Mammary epithelial cell (primary cell): ENCODE measurements at regions of chr10 and their contacts with region 1.

Region 1: GRCh38 chr10:74521526-74521925 is 304.9 kb upstream of the KAT6B start:
- DNase-seq: no peak
- H3K4me3 ChIP-seq: no peak overlapping the region
- H3K27ac ChIP-seq: no peak overlapping the region
- H3K4me1 ChIP-seq: no peaks in the 10 kb centered on the region
- H3K27me3 ChIP-seq: no peaks in the 10 kb centered on the region
- CTCF ChIP-seq: no peak

Region 2: GRCh38 chr10:74120911-74121310 is 400.6 kb before region 1 on chr10:
- CTCF ChIA-PET with region 1: no interaction called
- dilution Hi-C with region 1: no loop called
- in situ Hi-C with region 1: no loop called
- intact Hi-C with region 1: loop called (anchors 5 kb)
- DNase-seq: no peak
- H3K4me3 ChIP-seq: no peak overlapping the region
- H3K27ac ChIP-seq: no peak overlapping the region
- H3K4me1 ChIP-seq: peaks cover 13% of the 10 kb centered on the region
- H3K27me3 ChIP-seq: no peaks in the 10 kb centered on the region
- CTCF ChIP-seq: no peak